Heart left ventricle (tissue), 16 donors: ENCODE measurements at regions of chr18 and their contacts with region 1.

Region 1: DNA sequence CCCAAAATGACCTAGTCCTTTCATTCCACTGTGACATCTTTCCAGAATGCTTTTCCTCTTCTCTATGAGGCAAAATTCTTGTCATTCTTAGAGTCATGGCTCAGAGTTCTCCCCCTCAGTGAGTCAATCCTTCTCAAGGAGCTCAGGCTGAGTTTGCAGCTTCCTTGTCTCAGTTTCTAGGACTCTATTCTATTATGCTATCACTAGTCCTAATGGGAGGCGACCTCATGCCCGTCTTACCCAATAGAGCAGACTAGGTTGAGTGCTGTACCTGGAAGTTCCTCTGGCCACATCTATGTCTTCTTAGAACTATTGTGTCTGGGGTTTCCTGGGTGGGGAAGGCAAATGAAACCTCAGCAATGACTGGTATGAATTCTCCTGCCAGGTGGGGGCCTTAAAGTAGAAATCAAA is 51.5 kb downstream of the HAUS1 start:
- DNase-seq: no peak
- ATAC-seq: no peak
- H3K4me3 ChIP-seq: no peak overlapping the region
- H3K27ac ChIP-seq: peak overlapping the region in 1 of 12 donors; percentile 16
- H3K4me1 ChIP-seq: peaks cover 0 to 20% (median 0%) of the 10 kb centered on the region in 12 donors
- H3K27me3 ChIP-seq: no peaks in the 10 kb centered on the region
- CTCF ChIP-seq: no peak
- POLR2A ChIP-seq: no peak

Region 2: GRCh38 chr18:46104128-46104911 is 51.3 kb before region 1 on chr18 and contains the start of gene HAUS1:
- intact Hi-C with region 1: no loop called
- DNase-seq: peak; percentile 93 to 96 (median 94)
- ATAC-seq: peak; percentile 91 to 98 (median 98)
- H3K4me3 ChIP-seq: peak within 1 kb of the TSS; percentile 70 to 98 (median 80)
- H3K27ac ChIP-seq: peak within 1 kb of the TSS; percentile 30 to 91 (median 84)
- H3K4me1 ChIP-seq: peaks cover 0 to 12% (median 6%) of the 10 kb centered on the region in 12 donors
- H3K27me3 ChIP-seq: no peaks in the 10 kb centered on the region
- CTCF ChIP-seq: no peak
- POLR2A ChIP-seq: peak; percentile 32 to 77
- total RNA-seq, gene HAUS1: 6.7 to 15.1 (median 9.5) TPM

Region 3: GRCh38 chr18:46411867-46412690 is 256.4 kb after region 1 on chr18:
- intact Hi-C with region 1: loop called in 1 of 10 experiments (anchors 10 kb)
- DNase-seq: peak in 4 of 5 donors; percentile 58 to 71 (median 62)
- ATAC-seq: peak; percentile 73 to 82 (median 76)
- H3K4me3 ChIP-seq: peak overlapping the region in 2 of 12 donors; percentile 9 to 22
- H3K27ac ChIP-seq: peak overlapping the region; percentile 35 to 98 (median 82)
- H3K4me1 ChIP-seq: peaks cover 4 to 91% (median 45%) of the 10 kb centered on the region in 12 donors
- H3K27me3 ChIP-seq: no peaks in the 10 kb centered on the region
- CTCF ChIP-seq: no peak
- POLR2A ChIP-seq: no peak

Region 4: GRCh38 chr18:46502444-46502843 is 346.8 kb after region 1 on chr18:
- intact Hi-C with region 1: loop called in 1 of 10 experiments (anchors 10 kb)
- DNase-seq: no peak
- ATAC-seq: no peak
- H3K4me3 ChIP-seq: no peak overlapping the region
- H3K27ac ChIP-seq: no peak overlapping the region
- H3K4me1 ChIP-seq: no peaks in the 10 kb centered on the region
- H3K27me3 ChIP-seq: no peaks in the 10 kb centered on the region
- CTCF ChIP-seq: no peak
- POLR2A ChIP-seq: no peak

Region 5: DNA sequence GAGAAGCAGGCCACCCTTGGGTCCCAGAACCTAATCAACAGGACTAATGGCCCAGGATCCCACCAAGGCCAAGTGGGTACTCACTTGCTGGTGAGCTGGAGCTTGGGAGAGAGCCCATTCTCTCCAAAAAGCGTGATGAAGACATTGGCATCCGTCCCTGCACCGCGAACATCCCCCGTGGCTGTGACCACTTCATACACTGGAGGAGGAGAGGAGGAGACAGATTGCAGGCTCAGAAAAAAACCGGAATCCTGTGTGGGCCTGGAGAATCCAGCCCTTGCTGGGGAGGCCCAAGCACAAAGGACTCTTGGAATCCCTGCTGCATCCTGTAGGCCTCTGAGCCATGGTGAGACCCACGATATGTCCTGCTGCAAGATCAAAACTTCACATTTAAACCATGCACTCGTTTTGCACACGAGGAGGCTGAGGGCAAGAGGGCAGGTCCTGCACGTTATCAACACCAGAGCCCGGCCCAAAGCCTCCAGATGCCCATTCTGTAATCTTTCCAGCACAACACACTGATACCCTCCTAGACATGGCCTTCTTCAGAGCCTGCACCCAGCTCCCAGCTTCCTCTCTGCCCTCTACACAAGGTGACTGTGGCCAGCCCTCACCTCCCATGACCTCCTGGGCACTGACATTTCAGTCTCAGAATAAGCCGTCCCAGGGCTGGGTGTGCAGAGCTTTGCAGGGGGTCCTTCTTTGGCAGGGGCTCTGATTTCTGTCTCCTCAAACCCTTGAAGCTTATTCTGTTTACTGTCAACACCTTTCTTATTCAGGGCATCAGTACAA is 493.6 kb after region 1 on chr18:
- intact Hi-C with region 1: loop called in 1 of 10 experiments (anchors 5 kb)
- DNase-seq: no peak
- ATAC-seq: peak in 3 of 4 donors; percentile 50 to 73 (median 58)
- H3K4me3 ChIP-seq: no peak overlapping the region
- H3K27ac ChIP-seq: no peak overlapping the region
- H3K4me1 ChIP-seq: no peaks in the 10 kb centered on the region
- H3K27me3 ChIP-seq: no peaks in the 10 kb centered on the region
- CTCF ChIP-seq: no peak
- POLR2A ChIP-seq: no peak

Region 6: DNA sequence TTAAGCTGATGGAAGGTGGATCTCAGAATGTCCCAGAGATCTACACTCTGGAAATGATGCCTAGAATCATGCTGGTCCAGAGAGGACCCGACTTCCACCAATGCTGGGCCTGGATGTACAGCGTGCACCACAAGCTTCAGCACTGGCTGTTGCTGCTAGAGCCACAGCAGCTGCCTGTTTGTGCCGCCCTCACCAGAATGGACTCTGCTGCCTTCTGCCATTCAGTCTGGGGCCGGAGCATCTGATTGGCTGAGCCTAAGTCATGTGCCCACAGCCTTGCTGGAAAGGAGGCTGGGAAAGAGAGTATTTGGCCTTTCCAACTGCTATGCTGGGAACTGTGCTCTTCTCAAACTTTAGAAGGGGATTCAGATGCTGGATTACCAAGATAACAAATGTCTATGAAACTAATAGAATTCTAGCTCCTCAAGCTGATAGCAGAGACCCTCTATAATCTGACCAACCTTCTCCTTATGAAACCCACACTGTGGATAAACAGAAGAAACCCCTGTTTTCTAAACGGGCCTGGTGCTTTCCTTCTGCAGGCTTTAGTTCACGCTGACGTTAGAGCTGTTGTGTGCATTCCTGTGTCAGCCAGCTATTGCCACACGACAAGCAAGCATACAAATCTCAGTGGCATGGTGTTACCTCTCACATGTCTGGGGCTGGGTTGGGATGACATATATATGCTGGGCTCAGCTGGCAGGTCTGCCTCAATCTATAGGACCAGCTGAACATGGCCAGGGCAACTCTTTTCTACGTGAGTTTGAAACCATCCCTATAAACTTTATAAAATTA is 505.5 kb after region 1 on chr18:
- intact Hi-C with region 1: loop called in 2 of 10 experiments (anchors 5 kb)
- DNase-seq: no peak
- ATAC-seq: peak in 2 of 4 donors; percentile 32 to 36
- H3K4me3 ChIP-seq: no peak overlapping the region
- H3K27ac ChIP-seq: no peak overlapping the region
- H3K4me1 ChIP-seq: no peaks in the 10 kb centered on the region
- H3K27me3 ChIP-seq: peaks cover 0 to under 1% (median 0%) of the 10 kb centered on the region in 9 donors
- CTCF ChIP-seq: no peak
- POLR2A ChIP-seq: no peak